ENCODE measurements at regions of chr11 and their contacts with region 1.

Region 1: GRCh38 chr11:128242451-128242850 is 344.9 kb downstream of the ETS1 start:
- DNase-seq: no peak
- H3K4me3 ChIP-seq: no peak overlapping the region
- H3K27me3 ChIP-seq: no peaks in the 10 kb centered on the region
- CTCF ChIP-seq: no peak

Region 2: DNA sequence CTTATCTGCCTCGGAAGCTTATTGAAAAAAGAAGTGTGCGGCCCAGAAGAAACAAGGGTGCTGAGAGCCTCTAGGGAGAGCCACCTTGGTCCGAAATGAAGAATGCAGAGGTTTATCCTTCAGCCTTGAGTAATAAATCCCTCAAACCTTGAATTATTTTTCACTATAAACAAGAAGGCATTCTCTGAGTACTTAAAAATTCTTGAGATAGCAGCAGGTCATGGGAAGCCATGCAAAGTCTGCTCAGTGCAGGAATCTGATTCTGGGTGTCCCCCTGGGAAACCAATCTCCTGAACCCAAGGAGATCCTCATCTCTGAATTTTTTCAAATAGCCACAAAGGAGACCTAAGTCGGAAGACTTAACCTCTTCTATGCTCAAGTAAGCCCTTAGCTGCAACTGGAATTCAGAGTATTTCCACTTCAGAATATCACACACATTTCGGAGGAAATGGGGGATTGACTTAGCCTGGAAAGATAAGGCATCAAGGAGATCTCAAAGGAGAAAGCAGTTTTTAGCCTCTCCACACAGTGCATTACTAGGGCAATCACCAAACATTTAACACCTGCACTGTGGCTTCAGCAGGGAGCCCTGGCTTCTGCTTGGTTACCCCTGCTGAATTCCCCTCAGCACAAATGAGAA is 20.1 kb before region 1 on chr11:
- CTCF ChIA-PET with region 1: no interaction called
- POLR2A ChIA-PET with region 1: interaction called, 10 read pairs
- DNase-seq: no peak
- H3K4me3 ChIP-seq: no peak overlapping the region
- H3K27me3 ChIP-seq: no peaks in the 10 kb centered on the region
- CTCF ChIP-seq: no peak